Prostate gland (tissue), 2 donors: ENCODE measurements at regions of chr2 and their contacts with region 1.

Region 1: DNA sequence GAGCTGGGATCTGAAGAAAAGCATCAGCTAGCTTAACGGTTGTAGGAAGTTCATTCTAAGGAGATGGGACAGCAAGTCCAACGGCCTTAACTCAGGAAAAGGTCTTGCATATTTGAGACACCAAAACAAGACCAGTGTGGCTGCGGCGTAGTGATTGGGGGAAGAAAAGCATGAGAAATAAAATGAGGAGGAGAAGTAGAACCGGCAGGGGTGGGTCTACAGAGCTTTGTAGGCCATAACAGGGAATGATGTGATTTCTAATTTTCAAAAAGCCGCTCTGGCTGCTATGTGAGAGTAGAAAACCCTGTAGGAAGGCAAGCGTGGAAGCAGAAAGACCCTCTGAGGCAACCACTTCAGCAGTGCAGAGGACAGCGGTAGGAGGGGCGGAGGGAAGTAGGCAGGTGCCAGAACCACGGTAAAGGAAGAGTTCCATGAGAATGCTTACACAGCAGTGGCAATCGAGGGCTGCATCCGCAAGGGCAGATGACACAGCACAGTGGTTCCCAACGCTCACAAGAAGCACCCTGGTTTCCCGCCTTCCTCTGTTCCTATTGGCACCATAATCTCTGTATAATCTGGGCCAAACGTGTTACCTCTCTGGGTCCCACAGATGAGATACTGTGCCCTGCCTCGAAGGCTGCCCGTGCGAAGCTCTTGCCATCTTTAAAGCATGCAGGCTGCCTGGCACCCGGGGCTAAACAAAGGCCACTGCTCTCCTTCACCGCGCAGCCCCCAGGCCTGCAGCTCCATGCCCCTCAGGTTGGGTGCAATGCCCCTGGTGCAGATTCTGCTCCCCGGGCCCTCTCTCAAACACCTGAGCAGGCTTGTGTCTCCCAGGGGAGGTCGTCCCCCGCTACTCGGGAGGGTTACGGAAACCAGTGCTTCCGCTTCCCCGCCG is 791 bp downstream of the ANKRD39 start:
- DNase-seq: no peak
- H3K4me3 ChIP-seq: peak overlapping the region; percentile 73 to 76
- H3K27ac ChIP-seq: peak overlapping the region; percentile 84 to 85
- H3K4me1 ChIP-seq: peaks cover 16% of the 10 kb centered on the region
- H3K27me3 ChIP-seq: no peaks in the 10 kb centered on the region
- CTCF ChIP-seq: no peak
- POLR2A ChIP-seq: no peak

Region 2: GRCh38 chr2:96816128-96816835 is 40.7 kb before region 1 on chr2 and contains the start of gene CNNM3:
- intact Hi-C with region 1: loop called (anchors 5 kb)
- DNase-seq: peak; percentile 97
- H3K4me3 ChIP-seq: peak within 1 kb of the TSS; percentile 52 to 70
- H3K27ac ChIP-seq: peak within 1 kb of the TSS; percentile 94 to 96
- H3K4me1 ChIP-seq: peaks cover 16% of the 10 kb centered on the region
- H3K27me3 ChIP-seq: no peaks in the 10 kb centered on the region
- CTCF ChIP-seq: peak; percentile 18 to 88 (median 64)
- POLR2A ChIP-seq: peak; percentile 81
- total RNA-seq, gene CNNM3: 29.7 to 29.8 TPM